CD4-positive, alpha-beta T cell (primary cell): ENCODE measurements at regions of chr15 and their contacts with region 1.

Region 1: GRCh38 chr15:44711356-44712107 is at the start of gene B2M:
- DNase-seq: peak; percentile 92 to 98 (median 96)
- ATAC-seq: peak; percentile 82
- H3K4me3 ChIP-seq: peak within 1 kb of the TSS; percentile 83
- H3K4me3 Mint-ChIP-seq: peak within 1 kb of the TSS; percentile 96
- H3K27ac ChIP-seq: peak within 1 kb of the TSS; percentile 99 to 100
- H3K27ac Mint-ChIP-seq: peak within 1 kb of the TSS; percentile 100
- H3K4me1 ChIP-seq: peaks cover 38% of the 10 kb centered on the region
- H3K4me1 Mint-ChIP-seq: peaks cover 70% of the 10 kb centered on the region
- H3K27me3 ChIP-seq: no peaks in the 10 kb centered on the region
- H3K27me3 Mint-ChIP-seq: no peaks in the 10 kb centered on the region
- CTCF ChIP-seq: no peak
- total RNA-seq, gene B2M: 4,357 to 4,503 TPM

Region 2: GRCh38 chr15:44536962-44537734 is 174.4 kb before region 1 on chr15 and contains the start of gene EIF3J:
- CTCF ChIA-PET with region 1: no interaction called
- POLR2A ChIA-PET with region 1: interaction called, 23 read pairs
- intact Hi-C with region 1: no loop called
- DNase-seq: peak; percentile 86 to 99 (median 94)
- ATAC-seq: peak; percentile 89
- H3K4me3 ChIP-seq: peak within 1 kb of the TSS; percentile 68
- H3K4me3 Mint-ChIP-seq: peak within 1 kb of the TSS; percentile 92
- H3K27ac ChIP-seq: peak within 1 kb of the TSS; percentile 86 to 97
- H3K27ac Mint-ChIP-seq: peak within 1 kb of the TSS; percentile 91
- H3K4me1 ChIP-seq: peaks cover 42% of the 10 kb centered on the region
- H3K4me1 Mint-ChIP-seq: peaks cover 59% of the 10 kb centered on the region
- H3K27me3 ChIP-seq: no peaks in the 10 kb centered on the region
- H3K27me3 Mint-ChIP-seq: no peaks in the 10 kb centered on the region
- CTCF ChIP-seq: no peak
- total RNA-seq, gene EIF3J: 67.6 to 69.2 TPM

Region 3: DNA sequence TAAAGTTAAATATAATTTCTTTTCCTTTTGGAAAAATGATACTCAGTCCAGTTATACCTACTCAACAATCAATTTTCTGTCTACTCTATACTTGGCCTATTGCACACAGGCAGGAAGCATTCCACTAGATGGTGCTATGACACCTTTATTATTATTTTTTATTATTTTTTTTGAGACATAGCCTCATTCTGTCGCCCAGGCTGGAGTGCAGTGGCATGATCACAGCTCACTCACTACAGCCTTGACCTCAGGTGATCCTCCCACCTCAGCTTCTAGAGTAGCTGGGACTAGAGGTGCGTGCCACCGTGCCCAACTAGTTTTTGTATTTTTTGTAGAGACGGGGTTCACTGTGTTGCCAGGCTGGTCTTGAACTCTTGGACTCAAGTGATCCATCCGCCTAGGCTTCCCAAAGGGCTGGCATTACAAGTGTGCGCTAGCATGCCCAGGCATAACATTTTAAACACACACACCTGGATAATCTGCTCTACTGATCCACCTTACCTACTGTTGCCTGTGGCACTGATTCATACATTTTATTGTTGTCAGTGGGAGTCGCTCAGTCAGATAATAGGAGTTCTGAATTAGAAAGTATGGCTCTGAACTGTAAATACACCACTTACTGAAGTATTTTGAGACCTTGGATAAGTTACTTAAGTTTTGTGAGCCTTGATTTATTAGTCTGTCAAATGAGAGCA is 118.3 kb before region 1 on chr15:
- CTCF ChIA-PET with region 1: no interaction called
- POLR2A ChIA-PET with region 1: interaction called, 20 read pairs
- intact Hi-C with region 1: no loop called
- DNase-seq: peak in 7 of 14 experiments; percentile 6 to 71 (median 23)
- ATAC-seq: peak; percentile 85
- H3K4me3 ChIP-seq: no peak overlapping the region
- H3K4me3 Mint-ChIP-seq: no peak overlapping the region
- H3K27ac ChIP-seq: no peak overlapping the region
- H3K27ac Mint-ChIP-seq: peak overlapping the region; percentile 76
- H3K4me1 ChIP-seq: peaks cover 16% of the 10 kb centered on the region
- H3K4me1 Mint-ChIP-seq: peaks cover 14% of the 10 kb centered on the region
- H3K27me3 ChIP-seq: no peaks in the 10 kb centered on the region
- H3K27me3 Mint-ChIP-seq: no peaks in the 10 kb centered on the region
- CTCF ChIP-seq: peak; percentile 72

Region 4: DNA sequence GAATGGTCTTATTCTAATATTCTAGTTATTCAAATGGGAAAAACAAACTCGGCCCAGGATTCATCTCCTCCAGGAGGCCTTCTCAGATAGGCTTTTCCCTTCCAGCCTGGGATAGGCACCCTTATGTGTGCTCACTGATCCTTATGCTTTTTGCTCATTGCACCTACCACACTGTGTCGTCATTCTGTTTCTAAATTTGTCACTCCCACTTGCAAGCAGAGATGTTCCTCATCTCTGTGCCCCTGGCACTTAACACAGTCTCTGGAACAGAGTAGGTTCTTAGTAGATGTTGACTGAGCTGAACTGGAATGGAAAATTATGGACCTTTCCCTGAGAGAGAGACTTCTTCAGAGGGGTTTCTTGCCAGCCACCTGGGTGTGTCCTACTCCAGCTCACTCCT is 29.3 kb before region 1 on chr15:
- CTCF ChIA-PET with region 1: interaction called, 9 read pairs
- POLR2A ChIA-PET with region 1: interaction called, 4,232 read pairs
- intact Hi-C with region 1: loop called in 1 of 2 experiments (anchors 2 kb)
- DNase-seq: no peak
- ATAC-seq: no peak
- H3K4me3 ChIP-seq: no peak overlapping the region
- H3K4me3 Mint-ChIP-seq: peak overlapping the region; percentile 77
- H3K27ac ChIP-seq: peak overlapping the region; percentile 38 to 68
- H3K27ac Mint-ChIP-seq: peak overlapping the region; percentile 89
- H3K4me1 ChIP-seq: peaks cover 68% of the 10 kb centered on the region
- H3K4me1 Mint-ChIP-seq: peaks cover 93% of the 10 kb centered on the region
- H3K27me3 ChIP-seq: no peaks in the 10 kb centered on the region
- H3K27me3 Mint-ChIP-seq: no peaks in the 10 kb centered on the region
- CTCF ChIP-seq: no peak

Region 5: GRCh38 chr15:44698641-44699040 is 12.9 kb before region 1 on chr15:
- CTCF ChIA-PET with region 1: interaction called, 5 read pairs
- POLR2A ChIA-PET with region 1: interaction called, 4,232 read pairs
- intact Hi-C with region 1: loop called in 1 of 2 experiments (anchors 2 kb)
- DNase-seq: no peak
- ATAC-seq: no peak
- H3K4me3 ChIP-seq: no peak overlapping the region
- H3K4me3 Mint-ChIP-seq: no peak overlapping the region
- H3K27ac ChIP-seq: no peak overlapping the region
- H3K27ac Mint-ChIP-seq: no peak overlapping the region
- H3K4me1 ChIP-seq: peaks cover 9% of the 10 kb centered on the region
- H3K4me1 Mint-ChIP-seq: peaks cover 28% of the 10 kb centered on the region
- H3K27me3 ChIP-seq: no peaks in the 10 kb centered on the region
- H3K27me3 Mint-ChIP-seq: no peaks in the 10 kb centered on the region
- CTCF ChIP-seq: no peak

Region 6: DNA sequence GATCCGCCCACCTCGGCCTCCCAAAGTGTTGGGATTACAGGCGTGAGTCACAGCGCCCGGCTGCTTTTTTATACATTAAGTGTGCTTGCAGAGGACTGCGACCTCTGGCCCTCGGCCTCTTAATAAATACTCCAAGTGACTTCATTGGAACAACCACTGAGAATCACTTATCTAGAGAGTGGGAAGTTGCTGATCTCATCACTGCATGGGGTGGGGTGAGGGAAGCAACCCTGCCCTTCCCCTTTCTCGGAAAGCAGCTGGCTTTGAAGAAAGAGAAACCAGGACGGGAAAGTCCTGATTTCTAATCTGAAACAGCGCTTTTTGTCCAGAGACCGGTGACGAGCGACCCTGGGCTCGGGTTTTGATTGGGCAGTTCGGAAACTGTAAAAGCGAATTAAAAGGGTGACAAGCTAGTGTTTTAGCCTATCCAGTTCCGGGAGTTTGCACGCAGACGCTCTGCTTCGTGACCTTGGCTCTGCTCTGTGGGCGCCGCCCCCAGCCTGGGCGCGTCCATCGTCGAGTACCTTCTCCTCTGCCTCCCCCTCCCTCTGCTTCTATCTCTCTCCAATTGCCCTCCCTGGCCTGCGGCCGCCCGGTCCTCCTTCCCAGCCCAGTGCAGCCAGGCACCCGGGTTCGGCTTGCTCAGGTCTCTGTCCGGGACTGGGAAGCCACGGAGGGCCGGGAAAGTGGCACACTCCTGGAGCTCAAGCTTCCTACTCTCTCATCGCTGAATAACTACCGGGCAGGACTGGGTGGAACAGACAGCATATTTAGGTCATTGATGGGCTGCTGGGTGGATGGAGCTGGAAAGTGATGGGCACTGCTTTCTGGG is 17.3 kb after region 1 on chr15:
- CTCF ChIA-PET with region 1: interaction called, 36 read pairs
- POLR2A ChIA-PET with region 1: interaction called, 2,107 read pairs
- intact Hi-C with region 1: loop called (anchors 1 kb)
- DNase-seq: peak; percentile 87 to 99 (median 93)
- ATAC-seq: peak; percentile 77
- H3K4me3 ChIP-seq: peak overlapping the region; percentile 79
- H3K4me3 Mint-ChIP-seq: peak overlapping the region; percentile 96
- H3K27ac ChIP-seq: peak overlapping the region; percentile 97 to 98
- H3K27ac Mint-ChIP-seq: peak overlapping the region; percentile 99
- H3K4me1 ChIP-seq: peaks cover 74% of the 10 kb centered on the region
- H3K4me1 Mint-ChIP-seq: peaks cover 90% of the 10 kb centered on the region
- H3K27me3 ChIP-seq: no peaks in the 10 kb centered on the region
- H3K27me3 Mint-ChIP-seq: no peaks in the 10 kb centered on the region
- CTCF ChIP-seq: no peak

Region 7: DNA sequence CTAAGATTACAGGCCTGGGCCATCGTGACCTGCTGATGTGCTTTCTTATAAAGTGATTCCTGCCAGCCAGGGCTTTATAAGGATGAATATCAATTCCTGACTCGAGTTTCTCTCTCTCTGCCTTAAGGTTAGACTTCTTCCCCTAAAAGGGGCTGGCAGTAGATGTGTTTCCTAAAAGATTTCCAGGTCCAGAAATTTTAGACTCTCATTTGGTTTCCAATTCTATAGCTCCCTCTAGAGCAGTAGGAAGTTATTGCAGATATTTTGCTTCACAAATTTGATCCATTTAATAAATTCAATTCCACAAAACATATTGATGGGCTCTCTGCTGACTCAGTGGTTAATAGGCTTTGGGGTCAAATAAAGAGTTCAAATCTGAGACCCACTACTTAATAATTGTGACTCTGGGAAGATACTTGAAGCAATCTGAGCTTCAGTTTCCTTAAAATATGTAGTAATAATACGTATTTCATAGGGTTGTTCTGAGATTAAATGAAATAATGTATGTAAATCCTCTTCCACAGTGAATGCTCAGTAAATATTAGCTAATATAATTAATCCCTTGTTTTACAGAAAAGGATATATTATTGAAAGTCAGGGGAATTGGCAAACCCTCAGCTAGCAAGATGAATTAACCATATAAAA is 26.9 kb after region 1 on chr15:
- CTCF ChIA-PET with region 1: interaction called, 71 read pairs
- POLR2A ChIA-PET with region 1: interaction called, 2,107 read pairs
- intact Hi-C with region 1: loop called (anchors 1 to 2 kb)
- DNase-seq: peak in 3 of 14 experiments; percentile 74 to 77 (median 74)
- ATAC-seq: peak; percentile 25
- H3K4me3 ChIP-seq: no peak overlapping the region
- H3K4me3 Mint-ChIP-seq: no peak overlapping the region
- H3K27ac ChIP-seq: no peak overlapping the region
- H3K27ac Mint-ChIP-seq: peak overlapping the region; percentile 62
- H3K4me1 ChIP-seq: peaks cover 37% of the 10 kb centered on the region
- H3K4me1 Mint-ChIP-seq: peaks cover 53% of the 10 kb centered on the region
- H3K27me3 ChIP-seq: no peaks in the 10 kb centered on the region
- H3K27me3 Mint-ChIP-seq: no peaks in the 10 kb centered on the region
- CTCF ChIP-seq: peak; percentile 91

Region 8: DNA sequence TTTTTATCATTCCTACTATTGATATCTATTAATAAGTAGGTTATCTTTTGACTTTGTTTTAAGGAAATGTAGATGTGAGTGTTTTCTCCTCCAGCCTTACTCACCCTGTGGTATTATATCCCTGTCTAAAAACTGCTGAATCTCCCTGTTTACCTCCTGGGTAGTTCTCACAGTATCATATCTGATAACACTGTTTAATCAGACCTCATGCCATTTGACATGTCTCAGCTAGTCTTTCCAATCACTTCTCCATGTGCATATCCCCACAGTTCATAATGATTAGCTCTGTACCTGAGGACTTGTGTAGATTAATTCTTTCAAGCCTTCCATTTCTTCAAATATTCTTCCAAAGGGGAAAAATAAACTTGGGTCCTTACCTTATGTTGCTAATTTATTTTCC is 371.7 kb after region 1 on chr15:
- CTCF ChIA-PET with region 1: no interaction called
- POLR2A ChIA-PET with region 1: no interaction called
- intact Hi-C with region 1: no loop called
- DNase-seq: no peak
- ATAC-seq: no peak
- H3K4me3 ChIP-seq: no peak overlapping the region
- H3K4me3 Mint-ChIP-seq: no peak overlapping the region
- H3K27ac ChIP-seq: no peak overlapping the region
- H3K27ac Mint-ChIP-seq: no peak overlapping the region
- H3K4me1 ChIP-seq: no peaks in the 10 kb centered on the region
- H3K4me1 Mint-ChIP-seq: no peaks in the 10 kb centered on the region
- H3K27me3 ChIP-seq: peaks cover 0 to 13% of the 10 kb centered on the region in 2 experiments
- H3K27me3 Mint-ChIP-seq: peaks cover 38% of the 10 kb centered on the region
- CTCF ChIP-seq: no peak